GM12878 (cell line): ENCODE measurements at regions of chr6 and their contacts with region 1.

Region 1: DNA sequence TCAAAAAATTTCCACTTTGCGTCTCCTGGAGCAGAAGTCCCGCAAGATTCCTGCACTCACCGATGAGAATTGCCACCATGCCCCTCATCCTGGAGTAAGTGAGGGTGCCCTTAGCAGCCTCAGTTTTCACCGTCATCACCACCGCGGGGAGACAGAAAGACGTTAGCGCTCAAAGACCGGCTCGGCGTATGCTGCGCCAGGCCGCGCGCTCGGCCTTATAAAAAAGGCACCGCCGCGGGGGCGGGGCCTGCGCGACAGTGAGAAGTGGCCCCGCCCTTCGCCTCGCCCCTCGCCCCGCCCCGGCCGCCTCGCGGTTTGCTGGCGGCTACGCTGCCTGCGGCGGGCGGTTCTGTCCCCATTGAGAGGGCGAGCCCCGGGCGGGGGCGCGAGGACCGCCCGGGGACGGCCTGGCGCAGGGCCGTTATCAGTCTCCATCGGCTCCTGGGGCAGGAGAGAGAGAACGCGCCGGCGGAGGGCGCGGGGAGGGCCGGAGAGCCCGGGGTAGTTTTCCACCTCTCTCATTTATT is 122.3 kb upstream of the SLC2A12 start:
- DNase-seq: peak; percentile 50
- ATAC-seq: peak; percentile 96
- H3K4me3 ChIP-seq: peak overlapping the region; percentile 82
- H3K27ac ChIP-seq: no peak overlapping the region
- H3K4me1 ChIP-seq: peaks cover 5% of the 10 kb centered on the region
- H3K27me3 ChIP-seq: peaks cover 2 to 9% of the 10 kb centered on the region in 2 experiments
- CTCF ChIP-seq: peak in 1 of 3 experiments; percentile 34; a peak in 3 of 6 replicates
- EP300 ChIP-seq: no peak
- POLR2A ChIP-seq: peak; percentile 99
- RAD21 ChIP-seq: peak; percentile 38; the same call in 1 of the 2 replicates

Region 2: GRCh38 chr6:134247231-134247833 is 72.6 kb after region 1 on chr6:
- CTCF ChIA-PET with region 1: no interaction called
- POLR2A ChIA-PET with region 1: no interaction called
- RAD21 ChIA-PET with region 1: no interaction called
- SMC1A ChIA-PET with region 1: interaction called, 3 read pairs
- in situ Hi-C with region 1: no loop called
- intact Hi-C with region 1: loop called (anchors 2 kb)
- DNase-seq: peak; percentile 97
- ATAC-seq: peak; percentile 94
- H3K4me3 ChIP-seq: no peak overlapping the region
- H3K27ac ChIP-seq: peak overlapping the region; percentile 64
- H3K4me1 ChIP-seq: peaks cover 31% of the 10 kb centered on the region
- H3K27me3 ChIP-seq: no peaks in the 10 kb centered on the region; a peak in 1 of 4 replicates
- CTCF ChIP-seq: no peak
- EP300 ChIP-seq: peak; percentile 90 to 97
- POLR2A ChIP-seq: no peak
- RAD21 ChIP-seq: no peak

Region 3: DNA sequence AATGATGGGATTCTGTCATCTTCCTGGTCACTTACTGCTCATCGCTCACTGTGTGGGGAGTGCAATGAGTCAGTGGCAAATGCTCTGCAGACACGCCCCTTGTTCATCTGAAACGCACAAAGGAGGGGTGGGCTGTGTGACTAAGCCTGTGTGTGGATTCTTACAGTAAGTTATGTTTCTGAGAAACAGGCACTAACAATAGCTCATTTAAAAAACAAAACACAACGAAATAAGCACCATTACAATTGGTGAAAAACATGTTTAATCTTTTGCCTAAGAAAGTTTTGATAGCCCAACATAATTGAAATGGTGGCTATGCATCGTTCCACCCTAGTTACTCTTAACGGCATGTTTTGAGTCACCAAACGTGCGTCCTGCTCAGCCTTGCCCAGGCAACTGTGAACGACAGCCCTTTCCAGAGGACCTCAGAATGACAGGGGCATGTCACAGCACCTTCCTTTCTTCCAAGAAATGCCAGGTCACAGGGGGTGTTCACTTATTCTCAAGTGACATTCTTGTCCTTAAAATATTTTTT is 261.6 kb after region 1 on chr6:
- CTCF ChIA-PET with region 1: interaction called, 3 read pairs
- POLR2A ChIA-PET with region 1: no interaction called
- RAD21 ChIA-PET with region 1: no interaction called
- SMC1A ChIA-PET with region 1: interaction called, 3 read pairs
- in situ Hi-C with region 1: no loop called
- intact Hi-C with region 1: loop called (anchors 5 kb)
- DNase-seq: peak; percentile 57
- ATAC-seq: peak; percentile 95
- H3K4me3 ChIP-seq: peak overlapping the region; percentile 9; the same call in 1 of the 2 replicates
- H3K27ac ChIP-seq: no peak overlapping the region
- H3K4me1 ChIP-seq: peaks cover 9% of the 10 kb centered on the region
- H3K27me3 ChIP-seq: no peaks in the 10 kb centered on the region
- CTCF ChIP-seq: no peak
- EP300 ChIP-seq: no peak
- POLR2A ChIP-seq: no peak
- RAD21 ChIP-seq: no peak

Region 4: DNA sequence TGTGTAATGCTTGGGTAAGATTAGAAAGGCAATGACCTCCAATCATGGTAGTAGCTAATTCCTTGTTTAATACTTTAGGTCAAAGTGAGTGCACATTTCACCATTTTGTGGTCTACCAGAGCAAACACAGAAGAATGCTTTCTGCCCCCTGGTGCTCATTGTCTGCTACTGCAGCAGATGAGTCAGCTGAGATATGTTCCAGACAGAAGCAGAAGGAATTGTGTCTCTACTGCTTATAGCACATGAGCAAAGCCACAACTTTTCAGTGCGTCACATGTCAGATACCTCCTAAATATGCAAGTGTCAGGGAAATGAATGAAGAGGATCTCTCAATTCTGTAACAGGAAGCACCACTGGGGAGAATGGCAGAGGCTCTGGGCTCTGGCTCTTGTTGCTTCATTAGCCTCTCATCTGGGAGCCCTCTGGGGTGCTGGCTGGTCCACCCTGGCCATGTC is 466.3 kb after region 1 on chr6:
- CTCF ChIA-PET with region 1: interaction called, 133 read pairs
- POLR2A ChIA-PET with region 1: no interaction called
- RAD21 ChIA-PET with region 1: interaction called, 41 read pairs
- SMC1A ChIA-PET with region 1: interaction called, 52 read pairs
- in situ Hi-C with region 1: loop called (anchors 5 kb)
- intact Hi-C with region 1: loop called (anchors 1 kb)
- DNase-seq: peak; percentile 45
- ATAC-seq: peak; percentile 90
- H3K4me3 ChIP-seq: no peak overlapping the region
- H3K27ac ChIP-seq: no peak overlapping the region
- H3K4me1 ChIP-seq: no peaks in the 10 kb centered on the region
- H3K27me3 ChIP-seq: no peaks in the 10 kb centered on the region; a peak in 1 of 4 replicates
- CTCF ChIP-seq: peak; percentile 89 to 98 (median 93); a peak in 5 of 6 replicates
- EP300 ChIP-seq: no peak
- POLR2A ChIP-seq: no peak
- RAD21 ChIP-seq: peak; percentile 93

Region 5: GRCh38 chr6:134882426-134883038 is 707.8 kb after region 1 on chr6:
- CTCF ChIA-PET with region 1: interaction called, 7 read pairs
- POLR2A ChIA-PET with region 1: no interaction called
- RAD21 ChIA-PET with region 1: no interaction called
- SMC1A ChIA-PET with region 1: interaction called, 5 read pairs
- in situ Hi-C with region 1: no loop called
- intact Hi-C with region 1: loop called (anchors 1 kb)
- DNase-seq: no peak
- ATAC-seq: peak; percentile 44; the same call in 2 of the 3 replicates
- H3K4me3 ChIP-seq: no peak overlapping the region
- H3K27ac ChIP-seq: no peak overlapping the region
- H3K4me1 ChIP-seq: no peaks in the 10 kb centered on the region
- H3K27me3 ChIP-seq: 0 out of 4 replicates have a peak, but pooled peaks cover 0 to 1% of the 10 kb centered on the region in 2 experiments
- CTCF ChIP-seq: peak; percentile 71 to 80 (median 76)
- EP300 ChIP-seq: no peak
- POLR2A ChIP-seq: no peak
- RAD21 ChIP-seq: peak; percentile 96